Sciatic nerve (tissue), 2 donors: ENCODE measurements at regions of chr2 and their contacts with region 1.

Region 1: DNA sequence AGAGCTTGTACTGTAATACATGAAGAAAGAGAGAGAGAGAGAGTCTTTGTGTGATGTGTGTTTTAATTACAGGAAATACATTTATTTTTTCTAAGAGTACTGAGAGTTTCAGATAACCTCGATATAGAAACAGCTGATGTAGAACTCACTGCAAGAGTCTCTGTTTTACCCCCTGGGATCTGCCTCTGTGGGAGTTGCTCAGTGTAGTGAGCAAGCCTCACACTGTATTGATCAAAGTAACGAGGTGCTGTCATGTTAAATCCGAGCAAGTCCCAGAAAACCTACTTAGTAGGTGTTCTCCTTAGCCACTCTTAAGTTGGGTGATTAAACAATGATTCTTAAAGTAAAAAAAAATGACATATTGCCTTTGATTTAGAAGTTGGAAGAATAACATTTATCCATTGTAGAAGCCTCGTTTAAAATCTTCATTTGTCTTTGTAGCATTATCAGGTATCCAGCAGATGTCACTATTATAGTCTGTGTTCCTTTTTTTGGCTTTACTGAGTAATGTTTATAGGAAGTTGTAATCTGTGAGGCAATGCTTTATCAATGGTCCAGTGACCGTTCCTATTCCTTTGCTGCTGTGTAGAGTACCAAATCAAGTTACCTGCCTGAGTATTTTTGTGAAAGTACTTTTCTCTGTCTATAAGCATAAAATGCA is 219.0 kb downstream of the MYO3B start:
- DNase-seq: no peak
- ATAC-seq: no peak

Region 2: DNA sequence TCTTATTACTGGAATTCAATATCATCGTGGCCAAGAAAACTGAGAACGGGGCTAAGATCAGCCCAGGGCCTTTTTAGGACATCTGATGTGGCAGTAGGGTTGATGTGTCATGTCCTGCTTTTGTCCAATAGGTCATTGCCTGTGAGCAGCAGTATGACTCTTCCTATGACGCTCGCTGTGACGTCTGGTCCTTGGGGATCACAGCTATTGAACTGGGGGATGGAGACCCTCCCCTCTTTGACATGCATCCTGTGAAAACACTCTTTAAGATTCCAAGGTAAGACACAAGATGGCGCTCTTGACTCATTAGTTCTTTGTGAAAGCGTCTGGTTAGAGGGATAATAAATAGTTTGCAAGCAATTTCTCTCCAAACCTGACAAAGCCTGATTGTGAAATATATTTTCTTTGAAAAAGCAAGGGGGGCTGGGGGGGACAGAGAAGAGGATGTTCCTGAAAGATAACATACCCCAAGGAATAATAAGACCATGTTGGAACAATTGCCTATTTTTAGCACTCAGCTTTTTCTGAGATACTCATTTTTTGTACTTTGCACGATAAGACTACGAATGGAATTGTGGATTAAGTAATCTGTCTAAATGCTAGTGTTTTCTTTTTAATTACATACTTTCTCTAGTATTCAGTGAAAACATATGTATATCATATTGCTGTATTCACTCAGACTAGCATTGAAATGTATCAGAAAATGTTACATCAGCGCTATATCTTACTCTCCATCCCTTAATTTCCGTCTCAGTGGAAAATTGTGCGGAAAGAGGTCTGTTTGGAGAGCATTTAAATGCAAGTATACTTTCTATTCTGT is 160.9 kb before region 1 on chr2:
- intact Hi-C with region 1: no loop called
- DNase-seq: peak; percentile 64
- ATAC-seq: peak; percentile 96

Region 3: GRCh38 chr2:170265321-170265720 is 131.6 kb before region 1 on chr2:
- intact Hi-C with region 1: no loop called
- DNase-seq: no peak
- ATAC-seq: no peak

Region 4: GRCh38 chr2:170425281-170425751 is 28.4 kb after region 1 on chr2:
- intact Hi-C with region 1: no loop called
- DNase-seq: no peak
- ATAC-seq: peak; percentile 39

Region 5: GRCh38 chr2:170815746-170816503 is 419.0 kb after region 1 on chr2:
- intact Hi-C with region 1: loop called (anchors 10 kb)
- DNase-seq: no peak
- ATAC-seq: peak; percentile 66

Region 6: DNA sequence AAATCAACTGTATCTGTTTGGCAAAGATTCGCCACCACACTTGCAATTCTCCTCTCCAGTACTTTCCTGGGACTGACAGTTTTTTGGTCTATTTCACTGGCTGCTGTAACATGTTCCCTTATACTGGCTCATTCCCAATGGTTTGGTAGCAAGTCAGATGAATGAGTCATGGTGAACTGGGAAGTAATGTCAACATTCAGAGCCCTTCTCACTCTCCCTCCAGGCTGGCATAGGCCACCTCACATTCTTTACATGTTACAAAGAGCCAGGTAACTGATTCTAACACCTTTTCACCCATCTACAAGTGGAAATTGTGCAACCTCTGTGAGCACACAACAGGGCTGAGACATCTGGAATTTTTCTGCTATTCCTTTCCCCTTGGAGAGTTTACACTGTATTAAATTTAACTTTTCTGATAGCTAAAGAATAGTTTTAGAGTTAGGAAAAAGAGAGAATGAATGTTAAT is 875.1 kb after region 1 on chr2:
- intact Hi-C with region 1: loop called (anchors 5 kb)
- DNase-seq: no peak
- ATAC-seq: peak; percentile 81